PC-3 (cell line): ENCODE measurements at regions of chr3 and their contacts with region 1.

Region 1: DNA sequence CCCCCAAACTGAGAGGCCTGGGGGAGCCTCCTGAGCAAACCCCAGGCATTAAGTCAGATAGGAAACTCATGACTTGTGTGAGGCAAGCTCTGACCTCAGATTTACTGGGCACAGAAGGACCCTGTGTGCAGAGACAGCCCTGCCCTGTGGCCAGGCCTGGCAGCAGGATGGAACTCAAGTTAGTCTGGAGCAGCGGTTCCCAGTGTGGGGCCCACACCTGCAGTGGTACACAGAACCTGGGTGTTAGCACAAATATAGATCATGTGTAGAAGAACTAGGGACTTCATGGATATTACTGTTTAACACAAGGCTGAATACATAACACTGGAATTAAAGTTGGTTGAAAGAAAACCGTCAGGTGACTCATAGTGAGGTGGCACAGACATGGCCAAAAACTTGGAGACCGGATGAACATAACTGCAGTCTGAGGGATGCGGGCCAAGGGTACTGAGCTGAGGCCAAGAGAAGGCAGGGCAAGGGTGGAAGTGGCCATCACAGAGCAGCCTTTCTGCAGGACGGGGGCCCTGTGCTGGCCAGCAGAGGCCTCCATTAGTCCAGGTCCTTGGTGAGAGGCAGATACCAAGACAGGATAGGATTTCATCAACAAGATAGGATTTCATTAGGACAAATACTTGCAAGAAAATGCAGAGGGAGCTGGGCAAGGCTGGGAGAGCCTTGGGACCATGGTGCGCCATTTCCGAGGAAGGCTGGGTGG is 40.9 kb downstream of the IRAK2 start:
- DNase-seq: peak; percentile 98
- ATAC-seq: peak; percentile 77
- H3K4me3 ChIP-seq: no peak overlapping the region
- H3K27ac ChIP-seq: peak overlapping the region; percentile 94
- H3K4me1 ChIP-seq: peaks cover 49% of the 10 kb centered on the region
- H3K27me3 ChIP-seq: no peaks in the 10 kb centered on the region
- CTCF ChIP-seq: no peak

Region 2: DNA sequence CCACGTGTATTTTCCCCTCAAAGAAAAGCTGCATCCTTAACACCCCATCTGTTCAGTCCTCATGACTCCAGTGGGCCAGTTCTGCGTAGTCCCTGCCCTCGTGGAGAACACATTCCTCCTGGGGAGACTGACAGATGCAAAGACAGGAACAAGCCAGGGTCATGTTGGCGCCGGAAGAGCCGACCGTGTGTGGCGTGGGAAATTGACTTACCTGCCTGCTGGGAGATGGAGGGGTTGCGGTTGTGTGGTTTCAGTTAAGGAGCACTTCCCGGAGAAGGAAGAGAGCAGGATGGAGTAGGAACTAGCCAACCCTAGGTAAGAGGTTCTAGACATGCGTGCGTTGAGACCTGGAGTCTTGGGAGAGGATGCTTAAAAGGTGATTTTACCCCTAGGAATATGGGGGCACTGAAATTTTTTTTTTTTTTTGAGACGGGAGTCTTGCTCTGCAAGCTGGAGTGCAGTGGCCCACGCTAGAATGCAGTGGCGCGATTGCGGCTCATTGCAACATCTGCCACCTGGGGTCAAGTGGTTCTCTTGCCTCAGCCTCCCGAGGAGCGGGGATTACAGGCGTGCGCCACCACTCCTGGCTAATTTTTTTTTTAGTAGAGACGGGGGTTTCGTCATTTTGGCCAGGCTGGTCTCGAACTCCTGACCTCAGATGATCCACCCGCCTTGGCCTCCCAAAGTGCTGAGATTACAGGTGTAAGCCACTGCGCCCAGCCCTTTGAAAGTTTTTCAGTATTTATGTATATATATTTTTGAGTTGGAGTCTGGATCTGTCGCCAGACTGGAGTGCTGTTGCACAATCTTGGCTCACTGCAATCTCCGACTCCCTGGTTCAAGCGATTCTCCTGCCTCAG is 62.7 kb before region 1 on chr3:
- CTCF ChIA-PET with region 1: no interaction called
- POLR2A ChIA-PET with region 1: interaction called, 3 read pairs
- intact Hi-C with region 1: loop called (anchors 5 kb)
- DNase-seq: peak; percentile 48
- ATAC-seq: peak; percentile 14
- H3K4me3 ChIP-seq: peak overlapping the region; percentile 97
- H3K27ac ChIP-seq: peak overlapping the region; percentile 63
- H3K4me1 ChIP-seq: peaks cover 10% of the 10 kb centered on the region; the same call in 1 of the 2 replicates
- H3K27me3 ChIP-seq: no peaks in the 10 kb centered on the region
- CTCF ChIP-seq: no peak

Region 3: GRCh38 chr3:10224784-10225665 is 19.4 kb after region 1 on chr3:
- CTCF ChIA-PET with region 1: no interaction called
- POLR2A ChIA-PET with region 1: no interaction called
- intact Hi-C with region 1: loop called (anchors 2 kb)
- DNase-seq: peak; percentile 92
- ATAC-seq: peak; percentile 50
- H3K4me3 ChIP-seq: no peak overlapping the region
- H3K27ac ChIP-seq: no peak overlapping the region
- H3K4me1 ChIP-seq: peaks cover 36% of the 10 kb centered on the region
- H3K27me3 ChIP-seq: no peaks in the 10 kb centered on the region
- CTCF ChIP-seq: peak; percentile 96